CD4-positive, alpha-beta memory T cell (primary cell): ENCODE measurements at regions of chr19 and their contacts with region 1.

Region 1: GRCh38 chr19:14505488-14506432 is 9.8 kb upstream of the GIPC1 start:
- DNase-seq: peak; percentile 61 to 73 (median 69)
- H3K4me3 ChIP-seq: no peak overlapping the region
- H3K4me3 Mint-ChIP-seq: peak overlapping the region in 7 of 8 donors; percentile 33 to 76 (median 68)
- H3K27ac ChIP-seq: peak overlapping the region; percentile 49
- H3K27ac Mint-ChIP-seq: peak overlapping the region; percentile 90 to 99 (median 97)
- H3K4me1 ChIP-seq: peaks cover 46% of the 10 kb centered on the region
- H3K4me1 Mint-ChIP-seq: peaks cover 34 to 74% (median 47%) of the 10 kb centered on the region in 4 donors
- H3K27me3 ChIP-seq: no peaks in the 10 kb centered on the region
- H3K27me3 Mint-ChIP-seq: no peaks in the 10 kb centered on the region

Region 2: DNA sequence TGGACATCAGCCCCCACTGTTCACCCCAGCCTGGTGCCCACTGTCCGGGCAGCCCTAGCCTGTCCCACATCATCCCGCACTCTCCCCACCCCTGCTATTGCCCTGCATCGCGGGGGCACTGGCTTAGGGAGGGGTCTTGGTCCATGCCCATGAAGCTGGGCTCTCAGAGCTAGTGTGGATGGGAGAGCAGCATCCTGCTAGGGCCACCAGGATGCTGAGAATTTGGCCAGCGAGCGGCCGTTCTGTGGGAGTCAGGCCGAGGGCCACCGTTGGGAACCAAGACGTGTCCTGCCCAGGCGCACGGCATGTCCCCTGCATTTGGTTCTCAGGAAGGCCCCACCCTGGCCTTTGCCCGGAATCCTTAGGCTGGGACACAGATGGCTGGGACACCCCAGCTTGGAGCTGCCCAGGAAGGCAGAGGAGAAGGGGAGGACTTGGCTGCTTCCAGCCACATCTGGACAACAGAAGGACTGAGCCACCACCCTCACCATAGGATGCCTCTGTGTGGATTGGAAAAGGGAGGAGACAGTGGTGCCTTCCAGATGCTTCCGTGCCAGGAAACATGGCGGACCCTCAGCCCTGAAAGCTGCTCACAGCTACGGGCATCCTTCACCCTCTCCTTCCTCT is 109.9 kb before region 1 on chr19:
- CTCF ChIA-PET with region 1: no interaction called
- POLR2A ChIA-PET with region 1: no interaction called
- intact Hi-C with region 1: no loop called
- DNase-seq: no peak
- H3K4me3 ChIP-seq: no peak overlapping the region
- H3K4me3 Mint-ChIP-seq: no peak overlapping the region
- H3K27ac ChIP-seq: no peak overlapping the region
- H3K27ac Mint-ChIP-seq: peak overlapping the region in 2 of 7 donors; percentile 65 to 87
- H3K4me1 ChIP-seq: no peaks in the 10 kb centered on the region
- H3K4me1 Mint-ChIP-seq: peaks cover 0 to 5% (median 4%) of the 10 kb centered on the region in 4 donors
- H3K27me3 ChIP-seq: no peaks in the 10 kb centered on the region
- H3K27me3 Mint-ChIP-seq: no peaks in the 10 kb centered on the region

Region 3: DNA sequence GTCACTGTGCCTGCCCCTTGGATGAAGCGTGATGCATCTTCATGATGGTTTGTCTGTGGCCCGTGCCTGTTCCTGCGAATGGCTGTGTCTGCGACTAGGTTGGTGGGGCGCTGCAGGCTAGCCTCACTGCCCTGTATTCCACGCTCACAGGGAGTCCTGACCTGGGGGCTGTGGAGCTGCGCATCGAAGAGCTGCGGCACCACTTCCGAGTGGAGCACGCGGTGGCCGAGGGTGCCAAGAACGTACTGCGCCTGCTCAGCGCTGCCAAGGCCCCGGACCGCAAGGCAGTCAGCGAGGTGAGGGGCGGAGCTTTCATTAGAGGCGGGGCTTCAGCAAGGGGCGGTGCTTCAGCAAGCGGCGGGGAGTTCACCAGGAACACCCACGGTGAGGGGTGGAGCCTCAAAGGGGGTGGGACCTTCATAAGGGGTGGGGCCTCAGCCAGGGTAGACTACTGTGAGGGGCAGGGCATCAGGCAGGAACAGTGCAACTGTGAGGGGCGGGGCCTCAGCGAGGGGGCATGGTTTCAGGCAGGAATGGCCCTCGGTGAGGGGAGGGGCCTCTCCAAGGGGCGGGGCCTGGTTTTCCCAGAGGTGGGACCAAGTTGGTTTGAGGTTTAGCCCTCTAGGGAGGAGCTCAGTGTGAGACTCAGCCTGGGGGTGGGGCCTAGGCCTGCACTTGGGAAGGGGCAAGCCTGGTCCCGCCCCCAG is 55.4 kb before region 1 on chr19:
- CTCF ChIA-PET with region 1: no interaction called
- POLR2A ChIA-PET with region 1: no interaction called
- intact Hi-C with region 1: no loop called
- DNase-seq: peak; percentile 47 to 76 (median 50)
- H3K4me3 ChIP-seq: no peak overlapping the region
- H3K4me3 Mint-ChIP-seq: no peak overlapping the region
- H3K27ac ChIP-seq: no peak overlapping the region
- H3K27ac Mint-ChIP-seq: peak overlapping the region in 5 of 7 donors; percentile 24 to 74 (median 43)
- H3K4me1 ChIP-seq: peaks cover 7% of the 10 kb centered on the region
- H3K4me1 Mint-ChIP-seq: peaks cover 10 to 22% (median 14%) of the 10 kb centered on the region in 4 donors
- H3K27me3 ChIP-seq: no peaks in the 10 kb centered on the region
- H3K27me3 Mint-ChIP-seq: no peaks in the 10 kb centered on the region

Region 4: DNA sequence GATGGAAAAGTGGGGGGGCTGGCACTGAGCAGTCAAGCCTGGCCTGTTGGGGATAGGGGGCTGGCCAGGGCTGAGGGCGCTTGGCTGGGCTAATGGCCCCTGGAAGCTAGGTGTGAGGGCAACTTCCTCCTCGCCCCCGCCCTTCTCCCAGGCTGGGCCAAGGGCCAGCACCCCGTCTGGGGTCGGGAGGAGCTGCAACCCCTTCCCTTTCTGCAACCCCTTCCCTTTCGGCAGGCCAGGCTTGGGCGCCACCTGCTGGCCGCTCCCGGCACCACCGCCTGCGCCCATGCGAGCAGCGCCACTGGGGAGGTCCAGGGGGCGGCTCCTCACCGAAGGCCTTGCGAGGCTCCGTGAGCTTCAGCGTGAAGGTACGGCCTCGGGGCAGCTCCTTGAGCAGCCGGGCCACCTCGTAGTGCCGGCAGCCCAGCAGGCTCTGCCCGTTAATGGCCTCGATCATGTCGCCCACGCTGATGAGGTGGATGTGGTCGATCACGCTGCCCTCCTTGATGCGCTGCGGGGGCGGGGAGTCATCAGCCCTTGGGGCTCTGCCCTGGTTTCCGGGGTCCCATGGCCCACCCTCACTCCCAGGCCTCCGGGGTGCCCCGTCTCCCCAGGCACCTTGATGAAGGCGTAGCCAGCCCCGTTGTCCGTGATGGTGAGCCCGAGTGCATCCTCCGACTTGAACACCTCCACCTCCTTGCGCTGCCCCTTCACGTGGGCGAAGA is 25.6 kb before region 1 on chr19:
- CTCF ChIA-PET with region 1: interaction called, 10 read pairs
- POLR2A ChIA-PET with region 1: interaction called, 8 read pairs
- intact Hi-C with region 1: no loop called
- DNase-seq: peak; percentile 56 to 75 (median 64)
- H3K4me3 ChIP-seq: no peak overlapping the region
- H3K4me3 Mint-ChIP-seq: no peak overlapping the region
- H3K27ac ChIP-seq: no peak overlapping the region
- H3K27ac Mint-ChIP-seq: no peak overlapping the region
- H3K4me1 ChIP-seq: peaks cover 18% of the 10 kb centered on the region
- H3K4me1 Mint-ChIP-seq: peaks cover 7 to 15% (median 11%) of the 10 kb centered on the region in 4 donors
- H3K27me3 ChIP-seq: no peaks in the 10 kb centered on the region
- H3K27me3 Mint-ChIP-seq: peaks cover 0 to 7% of the 10 kb centered on the region in 2 donors

Region 5: DNA sequence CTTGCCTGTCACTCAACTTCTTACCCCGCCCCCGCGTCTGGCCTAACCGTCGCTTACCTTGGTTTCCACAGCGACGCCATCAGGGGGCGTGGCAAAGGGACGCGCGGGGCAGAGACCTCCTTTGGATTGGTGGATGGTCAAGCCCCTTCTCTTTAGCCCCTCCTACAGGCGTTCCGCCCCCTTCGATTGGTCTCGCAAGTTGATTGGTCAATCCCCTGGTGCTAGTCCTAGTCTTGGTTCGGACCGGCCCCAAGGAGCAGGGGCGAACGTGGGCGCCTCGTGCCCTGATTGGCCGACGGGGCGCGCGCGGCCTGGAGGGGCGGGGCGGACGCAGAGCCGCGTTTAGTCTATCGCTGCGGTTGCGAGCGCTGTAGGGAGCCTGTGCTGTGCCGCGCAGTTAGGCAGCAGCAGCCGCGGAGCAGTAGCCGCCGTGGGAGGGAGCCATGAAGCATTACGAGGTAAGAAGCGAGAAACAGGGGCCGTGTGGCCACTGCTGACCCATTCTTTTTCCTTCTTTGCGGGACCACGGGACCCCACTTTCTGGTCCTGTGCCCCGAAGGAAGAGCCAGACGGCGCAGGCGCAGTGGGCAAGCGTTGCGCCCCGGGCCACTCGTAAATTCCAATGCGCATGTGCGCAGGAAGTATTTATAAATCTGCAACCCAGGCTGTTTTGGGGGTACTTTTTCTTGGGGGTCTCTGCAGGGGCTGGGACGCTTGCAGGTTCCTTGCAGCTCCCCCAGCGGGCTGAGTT is 23.7 kb after region 1 on chr19 and contains the start of gene TECR:
- CTCF ChIA-PET with region 1: interaction called, 20 read pairs
- POLR2A ChIA-PET with region 1: interaction called, 1,220 read pairs
- intact Hi-C with region 1: loop called (anchors 1 kb)
- DNase-seq: peak; percentile 100
- H3K4me3 ChIP-seq: peak within 1 kb of the TSS; percentile 99 to 100
- H3K4me3 Mint-ChIP-seq: peak within 1 kb of the TSS; percentile 89 to 96 (median 94)
- H3K27ac ChIP-seq: peak within 1 kb of the TSS; percentile 88
- H3K27ac Mint-ChIP-seq: peak within 1 kb of the TSS; percentile 98 to 100 (median 99)
- H3K4me1 ChIP-seq: peaks cover 47% of the 10 kb centered on the region
- H3K4me1 Mint-ChIP-seq: peaks cover 17 to 65% (median 44%) of the 10 kb centered on the region in 4 donors
- H3K27me3 ChIP-seq: no peaks in the 10 kb centered on the region
- H3K27me3 Mint-ChIP-seq: no peaks in the 10 kb centered on the region
- total RNA-seq, gene TECR: 189 to 194 TPM

Region 6: GRCh38 chr19:14556662-14557188 is 51.0 kb after region 1 on chr19:
- CTCF ChIA-PET with region 1: interaction called, 142 read pairs
- POLR2A ChIA-PET with region 1: interaction called, 33 read pairs
- intact Hi-C with region 1: loop called (anchors 1 kb)
- DNase-seq: peak; percentile 58 to 65 (median 62)
- H3K4me3 ChIP-seq: peak overlapping the region in 1 of 2 donors; percentile 18
- H3K4me3 Mint-ChIP-seq: peak overlapping the region; percentile 36 to 79 (median 60)
- H3K27ac ChIP-seq: no peak overlapping the region
- H3K27ac Mint-ChIP-seq: peak overlapping the region in 6 of 7 donors; percentile 52 to 95 (median 74)
- H3K4me1 ChIP-seq: peaks cover 45% of the 10 kb centered on the region
- H3K4me1 Mint-ChIP-seq: peaks cover 24 to 65% (median 30%) of the 10 kb centered on the region in 4 donors
- H3K27me3 ChIP-seq: no peaks in the 10 kb centered on the region
- H3K27me3 Mint-ChIP-seq: no peaks in the 10 kb centered on the region